Cardiac septum (tissue), 1 donor: ENCODE measurements at regions of chr18 and their contacts with region 1.

Region 1: DNA sequence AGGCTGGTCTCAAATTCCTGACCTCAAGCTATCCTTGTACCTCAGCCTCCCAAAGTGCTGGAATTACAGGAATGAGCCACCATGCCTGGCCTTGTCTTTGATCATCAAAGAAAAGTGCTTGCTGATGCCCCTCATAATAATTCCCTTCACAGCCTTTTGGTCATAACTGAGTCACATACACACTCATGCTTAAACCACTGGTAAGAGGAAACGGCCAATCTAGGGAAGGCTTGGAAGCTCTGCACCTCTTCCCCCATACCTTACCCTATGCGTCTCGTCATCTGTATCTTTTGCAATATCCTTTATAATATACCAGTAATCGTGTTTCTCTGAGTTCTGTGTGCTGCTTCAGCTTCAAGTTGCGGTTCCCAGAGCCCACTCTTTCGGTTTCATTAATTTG is 4.8 kb upstream of the RNF138 start:
- DNase-seq: no peak

Region 2: DNA sequence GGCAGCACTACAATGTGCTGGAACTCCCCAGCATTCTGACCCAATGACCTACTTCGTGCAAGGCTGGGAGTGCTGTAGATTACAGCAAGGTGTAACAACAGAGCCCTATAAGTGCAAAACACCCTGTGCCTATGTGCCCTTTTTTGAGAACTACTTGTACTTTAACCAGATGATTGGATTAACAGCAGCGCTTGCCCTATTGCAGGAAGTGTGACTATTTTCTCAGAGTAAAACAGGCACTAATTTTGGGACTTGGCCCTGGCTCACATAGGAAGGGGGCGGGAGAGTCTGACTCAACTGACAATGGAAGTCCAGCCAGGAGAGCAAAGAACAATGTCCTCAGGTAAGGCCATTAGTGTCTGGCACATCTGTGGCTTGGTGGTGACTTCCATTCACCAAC is 103.8 kb before region 1 on chr18:
- intact Hi-C with region 1: loop called (anchors 10 kb)
- DNase-seq: no peak

Region 3: DNA sequence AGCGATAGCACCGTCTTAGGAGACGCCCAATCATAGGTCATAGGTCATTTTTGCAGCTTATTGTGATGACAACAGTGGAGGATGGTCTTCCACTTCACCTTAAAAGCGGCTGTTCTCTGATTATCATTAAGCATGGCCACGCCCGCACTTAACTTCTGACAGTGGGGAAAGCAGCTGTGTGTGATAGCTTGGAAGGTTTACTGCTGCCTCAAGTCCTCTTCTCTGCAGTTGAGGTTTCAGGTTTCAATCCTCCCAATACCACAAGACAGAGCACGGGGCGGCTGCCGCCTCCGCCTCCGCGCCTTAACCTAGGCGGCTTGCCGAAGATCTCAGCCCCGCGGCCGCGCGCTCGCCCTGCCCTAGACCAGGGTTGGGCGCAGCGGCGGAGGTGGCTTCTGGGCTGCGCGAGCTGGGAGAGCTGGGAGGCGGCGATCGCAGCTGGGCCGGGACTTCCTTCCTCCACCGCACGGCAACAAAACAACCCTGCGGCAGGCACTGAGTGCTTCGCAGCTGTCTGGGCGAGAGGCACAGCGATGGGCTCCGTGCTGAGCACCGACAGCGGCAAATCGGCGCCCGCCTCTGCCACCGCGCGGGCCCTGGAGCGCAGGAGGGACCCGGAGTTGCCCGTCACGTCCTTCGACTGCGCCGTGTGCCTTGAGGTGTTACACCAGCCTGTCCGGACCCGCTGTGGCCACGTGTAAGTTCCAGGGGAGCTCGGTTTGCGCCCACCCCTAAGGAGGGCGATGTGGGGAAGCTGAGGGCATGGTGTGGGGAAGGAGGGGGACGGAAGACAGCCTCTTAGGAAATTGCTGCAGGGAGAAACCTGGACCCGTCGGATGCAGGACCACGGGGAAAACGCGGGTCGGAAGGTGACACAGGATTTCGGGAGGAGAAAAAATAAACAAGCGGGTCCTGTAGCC is 68.3 kb before region 1 on chr18 and contains the start of gene RNF125:
- intact Hi-C with region 1: loop called (anchors 1 kb)
- DNase-seq: peak; percentile 94
- total RNA-seq, gene RNF125: 1.5 TPM

Region 4: GRCh38 chr18:32287249-32287648 is 200.4 kb after region 1 on chr18:
- intact Hi-C with region 1: no loop called
- DNase-seq: no peak